ENCODE measurements at regions of chr4 and their contacts with region 1.

Region 1: GRCh38 chr4:139689093-139689722 is 23.6 kb downstream of the MGST2 start:
- DNase-seq: no peak
- ATAC-seq: peak; percentile 38
- H3K4me3 ChIP-seq: no peak overlapping the region
- H3K4me1 ChIP-seq: peaks cover 14% of the 10 kb centered on the region
- CTCF ChIP-seq: no peak

Region 2: DNA sequence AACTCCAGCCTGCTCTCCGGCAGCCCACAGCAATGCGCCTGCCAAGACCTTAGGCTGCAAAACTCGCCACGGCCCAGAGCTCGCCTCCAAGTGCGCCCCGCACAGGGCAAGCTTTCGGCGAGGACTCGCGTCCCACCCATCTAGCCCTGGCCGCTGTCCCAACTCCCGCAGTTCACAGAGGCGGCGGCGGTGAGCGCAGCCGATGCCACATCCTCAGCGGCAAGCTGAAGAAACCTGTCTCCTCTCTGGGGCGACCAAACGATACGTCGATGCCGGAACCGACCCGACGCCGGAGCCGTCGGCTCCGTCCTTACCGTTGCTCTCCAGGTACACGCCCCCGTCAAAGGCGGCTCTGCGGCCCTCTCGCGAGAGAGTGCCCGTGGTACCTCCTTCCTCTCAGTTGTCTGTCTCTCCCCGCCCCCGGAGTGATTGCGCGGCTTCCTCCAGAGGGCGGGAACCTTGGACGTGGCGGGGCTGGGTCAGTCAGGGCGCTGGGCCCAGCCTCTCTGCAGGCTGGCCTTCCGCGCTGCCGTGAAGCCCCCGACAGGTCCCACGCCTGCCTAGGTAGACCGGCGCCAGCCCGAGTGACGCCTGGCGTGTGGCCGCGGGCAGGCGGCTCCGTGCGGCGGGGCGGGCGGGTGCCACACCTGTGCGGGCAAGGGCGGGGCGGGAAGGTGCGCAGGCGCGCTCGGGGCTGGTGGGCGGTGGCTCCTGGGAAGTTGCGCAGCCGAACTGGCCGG is 235.7 kb before region 1 on chr4:
- intact Hi-C with region 1: no loop called
- DNase-seq: peak; percentile 98 to 99 (median 98)
- ATAC-seq: peak; percentile 94
- H3K4me3 ChIP-seq: peak overlapping the region; percentile 65
- H3K4me1 ChIP-seq: peaks cover 21% of the 10 kb centered on the region
- CTCF ChIP-seq: no peak

Region 3: DNA sequence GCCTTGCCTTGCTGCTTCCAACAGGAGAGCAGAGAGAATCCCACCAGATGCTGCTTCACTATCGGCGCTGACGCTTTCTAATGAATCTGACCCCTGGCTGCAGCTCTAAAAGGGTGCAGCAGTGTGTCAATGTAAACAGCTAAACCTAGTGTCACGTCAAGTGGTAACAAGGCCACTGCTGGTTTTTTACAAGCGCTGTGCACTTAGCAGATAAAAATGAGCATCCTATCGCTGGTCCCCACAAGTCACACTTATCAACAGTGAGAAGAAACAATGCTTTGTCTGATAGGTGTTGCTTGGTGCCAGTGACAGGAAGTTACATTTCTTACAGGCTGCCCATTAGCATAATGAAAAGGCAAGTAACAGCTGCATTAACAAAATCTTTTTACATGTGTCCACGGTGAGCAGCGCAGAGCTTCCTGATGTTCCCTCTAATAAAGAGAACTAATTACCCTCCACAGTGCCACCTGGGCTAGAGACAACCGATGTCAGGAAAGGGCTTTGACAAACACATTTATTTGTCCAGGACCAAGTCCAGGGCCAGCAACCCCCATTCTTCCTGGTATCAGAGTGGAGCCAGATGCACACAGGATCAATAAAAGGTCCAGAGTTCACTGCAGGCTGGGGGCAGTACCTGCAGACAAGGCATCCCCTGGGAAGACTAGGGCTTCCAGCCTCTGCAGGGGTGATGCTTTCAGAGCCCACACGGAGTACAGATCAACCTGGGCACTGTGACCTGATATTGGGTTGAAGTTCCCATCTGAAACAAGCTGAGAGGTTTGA is 152.4 kb after region 1 on chr4:
- intact Hi-C with region 1: no loop called
- DNase-seq: peak in 2 of 3 donors; percentile 41 to 53
- ATAC-seq: peak; percentile 90
- H3K4me3 ChIP-seq: no peak overlapping the region
- H3K4me1 ChIP-seq: peaks cover 7% of the 10 kb centered on the region
- CTCF ChIP-seq: no peak

Region 4: GRCh38 chr4:139857021-139857420 is 167.8 kb after region 1 on chr4:
- intact Hi-C with region 1: no loop called
- DNase-seq: no peak
- ATAC-seq: peak; percentile 42
- H3K4me3 ChIP-seq: no peak overlapping the region
- H3K4me1 ChIP-seq: no peaks in the 10 kb centered on the region
- CTCF ChIP-seq: no peak

Region 5: GRCh38 chr4:140213749-140214148 is 524.5 kb after region 1 on chr4:
- intact Hi-C with region 1: loop called in 1 of 2 experiments (anchors 5 kb)
- DNase-seq: no peak
- ATAC-seq: peak; percentile 42
- H3K4me3 ChIP-seq: no peak overlapping the region
- H3K4me1 ChIP-seq: peaks cover 20% of the 10 kb centered on the region
- CTCF ChIP-seq: no peak